ENCODE measurements at regions of chr17 and their contacts with region 1.

Region 1: DNA sequence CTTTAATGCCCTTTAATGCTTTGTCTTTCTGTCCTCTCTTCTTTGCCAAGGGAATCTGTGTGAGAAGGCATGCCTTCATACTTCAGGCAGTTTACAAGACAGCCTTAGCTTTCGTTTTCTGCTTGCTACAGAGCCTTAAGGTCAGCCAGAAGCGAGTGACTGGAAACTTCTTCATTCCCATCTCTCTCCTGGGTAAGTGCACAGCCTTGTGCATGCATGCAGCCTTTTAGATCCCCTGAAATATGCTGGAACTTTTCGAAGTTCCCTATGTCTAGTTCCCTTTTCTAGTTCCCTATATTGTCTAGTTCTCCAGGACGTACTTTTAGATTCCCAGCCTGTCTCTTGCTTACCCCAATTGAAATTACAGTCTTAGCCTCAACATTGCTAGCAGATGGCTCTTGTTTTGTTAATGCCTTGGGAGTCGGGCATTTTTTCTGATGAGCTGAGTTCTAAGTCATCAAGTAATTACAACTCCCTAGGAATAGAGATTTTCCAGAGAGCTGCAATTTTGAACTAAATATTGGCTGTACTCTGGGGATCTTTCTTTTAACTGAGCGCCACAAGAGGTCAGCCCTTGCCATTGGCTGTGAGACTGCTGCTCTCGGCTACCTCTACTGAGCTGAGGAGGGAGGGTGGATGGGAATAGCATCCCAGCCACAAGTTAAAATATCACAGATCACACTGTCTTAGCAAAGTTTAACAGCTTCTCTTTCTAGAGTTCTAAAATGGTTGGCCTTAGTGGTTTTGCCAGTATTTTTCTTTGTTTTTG is 22.7 kb upstream of the PPM1D start:
- DNase-seq: no peak
- H3K4me3 Mint-ChIP-seq: peak overlapping the region; percentile 69
- H3K27ac Mint-ChIP-seq: no peak overlapping the region
- H3K4me1 Mint-ChIP-seq: peaks cover 8% of the 10 kb centered on the region
- H3K27me3 Mint-ChIP-seq: peaks cover 12% of the 10 kb centered on the region

Region 2: GRCh38 chr17:60610473-60610872 is 33.1 kb after region 1 on chr17:
- CTCF ChIA-PET with region 1: no interaction called
- DNase-seq: no peak
- H3K4me3 Mint-ChIP-seq: no peak overlapping the region
- H3K27ac Mint-ChIP-seq: no peak overlapping the region
- H3K4me1 Mint-ChIP-seq: peaks cover 11% of the 10 kb centered on the region
- H3K27me3 Mint-ChIP-seq: no peaks in the 10 kb centered on the region

Region 3: GRCh38 chr17:60639019-60639330 is 61.6 kb after region 1 on chr17:
- CTCF ChIA-PET with region 1: interaction called, 11 read pairs
- DNase-seq: no peak
- H3K4me3 Mint-ChIP-seq: no peak overlapping the region
- H3K27ac Mint-ChIP-seq: no peak overlapping the region
- H3K4me1 Mint-ChIP-seq: no peaks in the 10 kb centered on the region
- H3K27me3 Mint-ChIP-seq: no peaks in the 10 kb centered on the region